Caco-2 (cell line): ENCODE measurements at regions of chr10 and their contacts with region 1.

Region 1: DNA sequence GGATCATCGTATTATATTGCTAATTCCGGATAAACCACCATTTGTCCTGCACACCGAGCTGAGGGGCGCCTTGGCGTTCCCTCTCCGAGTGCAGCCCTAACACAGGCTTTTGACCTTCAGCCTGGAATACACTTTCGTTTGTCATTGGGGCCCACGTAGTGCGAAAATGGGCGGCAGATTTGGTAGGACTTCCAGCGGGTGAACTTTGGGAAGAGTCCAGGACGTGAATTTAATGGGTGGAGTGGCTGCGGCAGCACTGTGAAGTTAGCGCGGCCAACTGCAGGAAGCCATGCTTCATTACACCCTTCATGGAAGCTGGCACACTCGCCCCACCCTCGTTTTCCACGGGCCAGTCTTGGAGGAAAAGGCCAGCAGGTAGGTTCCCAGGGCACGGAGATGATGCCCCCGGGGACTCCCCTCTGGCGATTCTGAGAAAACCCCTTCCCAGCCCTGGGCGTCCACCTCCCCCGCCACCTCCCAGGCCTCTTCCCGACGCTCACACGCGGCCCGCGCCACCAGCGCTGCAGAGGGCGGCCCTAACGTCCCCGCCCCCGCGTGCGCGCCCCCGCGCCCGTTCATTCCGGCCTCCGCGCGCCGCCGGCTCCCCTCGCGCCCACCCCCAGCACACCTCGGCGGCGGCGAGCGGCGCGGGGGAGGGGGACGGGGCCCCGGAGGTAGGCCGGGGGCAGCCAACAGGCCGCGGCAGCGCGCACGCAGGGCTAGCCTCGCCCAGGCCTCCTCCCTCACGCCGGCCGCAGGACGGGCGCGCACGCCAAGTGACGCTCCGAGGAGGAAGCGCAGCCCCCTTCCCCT is at the start of gene MLLT10:
- DNase-seq: peak; percentile 97 to 100
- H3K4me3 ChIP-seq: peak within 1 kb of the TSS; percentile 80
- H3K4me3 Mint-ChIP-seq: peak within 1 kb of the TSS; percentile 85
- H3K27ac Mint-ChIP-seq: peak within 1 kb of the TSS; percentile 94
- H3K4me1 ChIP-seq: peaks cover 25% of the 10 kb centered on the region
- H3K4me1 Mint-ChIP-seq: peaks cover 17% of the 10 kb centered on the region
- H3K27me3 ChIP-seq: no peaks in the 10 kb centered on the region
- H3K27me3 Mint-ChIP-seq: no peaks in the 10 kb centered on the region
- CTCF ChIP-seq: peak; percentile 30 to 44
- total RNA-seq, gene MLLT10: 84.3 and 85.3 TPM in 2 replicates

Region 2: GRCh38 chr10:21579291-21579690 is 45.6 kb after region 1 on chr10:
- CTCF ChIA-PET with region 1: no interaction called
- POLR2A ChIA-PET with region 1: interaction called, 10 read pairs
- intact Hi-C with region 1: no loop called
- DNase-seq: no peak
- H3K4me3 ChIP-seq: no peak overlapping the region
- H3K4me3 Mint-ChIP-seq: no peak overlapping the region
- H3K27ac Mint-ChIP-seq: no peak overlapping the region
- H3K4me1 ChIP-seq: no peaks in the 10 kb centered on the region
- H3K4me1 Mint-ChIP-seq: peaks cover 6% of the 10 kb centered on the region
- H3K27me3 ChIP-seq: no peaks in the 10 kb centered on the region
- H3K27me3 Mint-ChIP-seq: no peaks in the 10 kb centered on the region
- CTCF ChIP-seq: no peak